A673 (cell line): ENCODE measurements at regions of chr19 and their contacts with region 1.

Region 1: DNA sequence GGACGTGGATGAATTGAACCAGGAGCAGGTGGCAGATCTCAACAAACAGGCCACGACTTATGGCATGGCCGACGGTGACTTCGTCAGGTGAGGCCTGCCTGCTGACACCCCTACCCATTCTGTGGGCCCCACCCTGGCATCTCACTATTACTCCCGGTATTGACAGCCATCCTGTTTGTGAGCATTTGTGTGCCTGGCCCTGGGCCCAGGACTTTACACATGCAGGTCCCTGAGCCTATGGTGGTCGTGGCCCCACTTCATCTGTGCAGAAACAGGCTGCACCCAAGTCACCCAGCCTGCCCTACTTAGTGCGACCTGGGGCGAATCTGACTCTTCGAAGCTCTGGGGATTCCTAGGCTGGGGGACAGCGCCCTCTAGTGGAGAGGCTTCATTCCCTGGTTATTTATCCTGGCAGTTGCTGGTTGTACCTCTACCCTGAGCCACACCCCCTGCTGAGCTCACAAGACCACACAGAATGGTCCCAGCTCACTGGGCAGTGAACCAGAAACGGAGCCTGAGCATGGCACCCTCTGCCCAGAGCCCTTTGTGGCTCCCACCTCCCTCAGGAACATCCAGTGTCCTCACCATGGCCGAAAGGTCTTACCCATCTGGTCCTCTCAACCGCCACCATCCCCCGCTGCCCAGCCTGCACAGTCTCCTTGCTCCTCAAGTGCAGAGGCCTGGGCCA is 16.9 kb downstream of the ZNF296 start:
- DNase-seq: peak; percentile 78
- H3K4me3 ChIP-seq: no peak overlapping the region
- H3K27ac ChIP-seq: no peak overlapping the region
- H3K4me1 ChIP-seq: no peaks in the 10 kb centered on the region
- H3K27me3 ChIP-seq: no peaks in the 10 kb centered on the region
- CTCF ChIP-seq: peak; percentile 89

Region 2: GRCh38 chr19:44988896-44989556 is 70.4 kb before region 1 on chr19:
- CTCF ChIA-PET with region 1: interaction called, 12 read pairs
- POLR2A ChIA-PET with region 1: no interaction called
- intact Hi-C with region 1: no loop called
- DNase-seq: peak; percentile 81
- H3K4me3 ChIP-seq: no peak overlapping the region
- H3K27ac ChIP-seq: no peak overlapping the region
- H3K4me1 ChIP-seq: no peaks in the 10 kb centered on the region
- H3K27me3 ChIP-seq: no peaks in the 10 kb centered on the region
- CTCF ChIP-seq: peak; percentile 74

Region 3: GRCh38 chr19:45038931-45039893 is 20.2 kb before region 1 on chr19 and contains the start of gene CLASRP:
- CTCF ChIA-PET with region 1: interaction called, 16 read pairs
- POLR2A ChIA-PET with region 1: no interaction called
- intact Hi-C with region 1: no loop called
- DNase-seq: peak; percentile 95
- H3K4me3 ChIP-seq: peak within 1 kb of the TSS; percentile 97
- H3K27ac ChIP-seq: peak within 1 kb of the TSS; percentile 93
- H3K4me1 ChIP-seq: peaks cover 9% of the 10 kb centered on the region
- H3K27me3 ChIP-seq: no peaks in the 10 kb centered on the region
- CTCF ChIP-seq: no peak
- total RNA-seq, gene CLASRP: 104 and 109 TPM in 2 replicates

Region 4: DNA sequence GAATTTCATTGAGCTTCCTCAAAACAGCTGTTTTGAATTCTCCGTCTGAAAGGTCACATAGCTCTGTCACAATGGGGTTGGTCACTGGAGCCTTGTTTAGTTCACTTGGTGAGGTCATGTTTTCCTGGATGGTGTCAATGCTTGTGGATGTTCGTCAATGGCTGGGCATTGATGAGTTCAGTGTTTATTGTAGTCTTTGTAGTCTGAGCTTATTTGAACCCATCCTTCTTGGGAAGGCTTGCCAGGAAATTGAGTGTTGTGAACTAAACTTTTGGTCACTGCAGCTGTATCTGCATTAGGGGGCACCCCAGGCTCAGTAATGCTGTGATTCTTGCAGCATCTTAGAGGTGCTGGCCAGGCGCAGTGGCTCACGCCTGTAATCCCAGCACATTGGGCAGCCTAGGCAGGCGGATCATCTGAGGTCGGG is 141.2 kb after region 1 on chr19:
- CTCF ChIA-PET with region 1: no interaction called
- POLR2A ChIA-PET with region 1: no interaction called
- intact Hi-C with region 1: no loop called
- DNase-seq: no peak
- H3K4me3 ChIP-seq: no peak overlapping the region
- H3K27ac ChIP-seq: no peak overlapping the region
- H3K4me1 ChIP-seq: no peaks in the 10 kb centered on the region
- H3K27me3 ChIP-seq: no peaks in the 10 kb centered on the region
- CTCF ChIP-seq: no peak